MCF 10A (cell line): ENCODE measurements at regions of chr9 and their contacts with region 1.

Region 1: GRCh38 chr9:124658165-124659017 is 112.7 kb downstream of the NR6A1 start:
- DNase-seq: peak; percentile 98
- H3K4me3 Mint-ChIP-seq: peak overlapping the region; percentile 98
- H3K27ac Mint-ChIP-seq: peak overlapping the region; percentile 96
- H3K4me1 Mint-ChIP-seq: peaks cover 20% of the 10 kb centered on the region
- H3K27me3 Mint-ChIP-seq: no peaks in the 10 kb centered on the region
- CTCF ChIP-seq: no peak

Region 2: DNA sequence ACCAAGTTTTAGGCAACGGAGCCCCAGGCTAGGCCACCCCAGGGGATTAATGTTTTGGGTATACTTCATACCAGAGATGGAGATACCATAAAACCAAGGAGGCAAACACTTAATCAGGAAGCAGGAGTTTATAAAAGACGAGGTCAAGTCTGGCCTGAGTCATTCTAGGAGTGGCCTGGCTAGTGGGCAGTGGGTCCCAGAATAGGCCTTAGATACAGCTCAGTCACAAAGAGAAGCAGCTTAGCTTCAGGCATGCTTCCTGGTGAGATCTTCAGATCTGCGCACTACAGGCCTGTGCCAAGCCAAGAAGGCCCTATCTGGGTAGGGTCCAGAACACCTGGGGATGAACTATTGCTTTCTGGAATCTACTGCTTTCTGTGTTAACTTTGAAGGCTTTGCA is 130.6 kb before region 1 on chr9:
- CTCF ChIA-PET with region 1: no interaction called
- POLR2A ChIA-PET with region 1: no interaction called
- intact Hi-C with region 1: no loop called
- DNase-seq: no peak
- H3K4me3 Mint-ChIP-seq: no peak overlapping the region
- H3K27ac Mint-ChIP-seq: no peak overlapping the region
- H3K4me1 Mint-ChIP-seq: no peaks in the 10 kb centered on the region
- H3K27me3 Mint-ChIP-seq: no peaks in the 10 kb centered on the region
- CTCF ChIP-seq: no peak

Region 3: GRCh38 chr9:124629600-124629999 is 28.8 kb before region 1 on chr9:
- CTCF ChIA-PET with region 1: interaction called, 4 read pairs
- POLR2A ChIA-PET with region 1: interaction called, 41 read pairs
- intact Hi-C with region 1: no loop called
- DNase-seq: peak; percentile 35
- H3K4me3 Mint-ChIP-seq: no peak overlapping the region
- H3K27ac Mint-ChIP-seq: no peak overlapping the region
- H3K4me1 Mint-ChIP-seq: peaks cover 10% of the 10 kb centered on the region
- H3K27me3 Mint-ChIP-seq: no peaks in the 10 kb centered on the region
- CTCF ChIP-seq: no peak

Region 4: GRCh38 chr9:124675261-124676158 is 17.1 kb after region 1 on chr9:
- CTCF ChIA-PET with region 1: interaction called, 4 read pairs
- POLR2A ChIA-PET with region 1: interaction called, 13 read pairs
- intact Hi-C with region 1: no loop called
- DNase-seq: no peak
- H3K4me3 Mint-ChIP-seq: no peak overlapping the region
- H3K27ac Mint-ChIP-seq: no peak overlapping the region
- H3K4me1 Mint-ChIP-seq: no peaks in the 10 kb centered on the region
- H3K27me3 Mint-ChIP-seq: no peaks in the 10 kb centered on the region
- CTCF ChIP-seq: no peak

Region 5: GRCh38 chr9:124697326-124698200 is 39.2 kb after region 1 on chr9:
- CTCF ChIA-PET with region 1: interaction called, 3 read pairs
- POLR2A ChIA-PET with region 1: interaction called, 13 read pairs
- intact Hi-C with region 1: no loop called
- DNase-seq: no peak
- H3K4me3 Mint-ChIP-seq: peak overlapping the region; percentile 21
- H3K27ac Mint-ChIP-seq: no peak overlapping the region
- H3K4me1 Mint-ChIP-seq: peaks cover 30% of the 10 kb centered on the region
- H3K27me3 Mint-ChIP-seq: no peaks in the 10 kb centered on the region
- CTCF ChIP-seq: no peak